Dorsolateral prefrontal cortex (tissue), 120 donors: ENCODE measurements at regions of chr6 and their contacts with region 1.

Region 1: GRCh38 chr6:31541658-31542521 is at the start of gene DDX39B:
- DNase-seq: peak; percentile 93 to 97 (median 95)
- H3K4me3 ChIP-seq: peak within 1 kb of the TSS; percentile 58 to 97 (median 80)
- H3K27ac ChIP-seq: peak within 1 kb of the TSS; percentile 77 to 99 (median 97)
- H3K27me3 ChIP-seq: no peaks in the 10 kb centered on the region
- CTCF ChIP-seq: peak in 25 of 56 donors; percentile 10 to 57 (median 24)
- total RNA-seq, gene DDX39B: 154 to 265 (median 191) TPM

Region 2: DNA sequence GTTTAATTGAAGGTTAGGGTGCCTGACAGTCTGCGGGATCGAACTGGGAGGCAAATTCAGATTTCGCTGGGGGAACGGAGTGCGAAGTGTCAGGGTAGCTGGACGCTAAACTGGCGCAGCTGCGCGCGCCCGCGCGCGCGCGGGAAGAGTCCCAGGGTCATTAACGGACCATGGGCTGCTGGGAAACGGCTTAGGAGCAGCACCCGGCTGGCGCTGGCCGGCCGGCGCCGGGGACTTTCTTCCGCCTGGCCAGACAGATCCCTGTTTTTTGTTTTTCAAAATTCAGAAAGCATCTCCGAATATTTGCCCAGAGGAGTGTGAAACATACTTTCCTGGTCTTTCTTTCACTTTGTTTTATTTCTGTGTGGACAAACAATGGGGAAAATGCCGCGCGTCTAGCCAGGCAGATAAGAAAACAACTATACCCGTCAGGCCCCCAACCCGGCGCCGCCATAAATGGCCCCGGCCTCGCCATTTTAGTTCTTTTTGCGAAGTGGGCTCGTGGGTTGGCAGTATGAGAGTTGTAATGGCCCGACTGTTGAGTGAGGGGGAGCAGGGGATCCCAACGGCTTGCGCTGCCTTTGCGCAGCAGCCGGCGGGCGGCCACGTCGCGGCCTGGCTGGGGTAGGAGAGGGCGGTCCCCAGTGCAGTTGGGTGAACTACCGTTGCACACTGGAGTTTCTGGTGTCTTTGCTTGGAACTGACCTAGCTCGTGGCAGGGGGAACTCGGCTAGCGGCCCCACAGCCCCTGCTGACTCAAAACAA is 292.7 kb after region 1 on chr6:
- intact Hi-C with region 1: loop called in 1 of 2 experiments (anchors 10 kb)
- DNase-seq: peak; percentile 77 to 89 (median 86)
- H3K4me3 ChIP-seq: peak overlapping the region; percentile 72 to 100 (median 94)
- H3K27ac ChIP-seq: peak overlapping the region; percentile 79 to 99 (median 97)
- H3K27me3 ChIP-seq: no peaks in the 10 kb centered on the region
- CTCF ChIP-seq: peak in 26 of 56 donors; percentile 5 to 48 (median 22)